ENCODE measurements at regions of chr3 and their contacts with region 1.

Region 1: DNA sequence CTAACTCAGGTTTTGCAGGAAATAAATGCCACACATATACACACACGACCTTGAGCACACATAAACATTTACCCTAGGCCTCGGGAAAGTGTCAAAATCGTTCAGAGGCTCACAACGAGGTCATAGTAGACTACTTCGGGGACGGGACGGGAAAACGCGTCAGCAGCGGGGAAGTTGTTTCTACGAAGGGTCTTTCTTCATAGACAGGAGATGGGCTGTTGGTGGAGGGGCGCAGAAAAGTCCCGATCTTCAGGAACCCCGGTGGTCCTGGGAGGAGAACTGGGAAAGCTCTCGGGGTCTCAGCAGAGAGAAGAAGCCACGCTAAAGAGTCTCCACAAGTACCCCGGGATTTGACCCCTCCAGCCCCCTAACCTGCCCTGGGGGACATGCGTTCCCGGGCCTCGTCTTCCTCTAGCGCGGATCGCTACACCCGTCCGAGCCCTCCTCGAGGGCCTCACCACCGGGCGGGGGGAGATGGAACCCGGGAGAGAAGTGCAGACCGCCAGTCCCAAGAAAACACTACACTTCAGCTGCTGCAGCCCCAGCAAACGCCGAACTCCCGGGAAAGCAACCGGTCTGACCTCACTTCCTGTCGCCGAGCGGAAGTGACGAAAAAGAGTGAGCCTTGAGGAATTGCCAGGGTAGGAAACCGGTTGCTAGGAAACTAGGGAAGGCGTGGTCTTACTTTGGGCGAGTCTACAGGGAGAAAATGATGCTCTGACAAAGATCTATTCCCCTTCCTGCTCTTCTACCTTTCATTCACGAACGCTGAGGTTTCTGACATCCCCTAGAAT is at the start of gene PIK3R4:
- DNase-seq: peak; percentile 84 to 99 (median 92)
- ATAC-seq: peak; percentile 86 to 91 (median 88)
- H3K4me3 ChIP-seq: peak within 1 kb of the TSS; percentile 76 to 87
- H3K4me3 Mint-ChIP-seq: peak within 1 kb of the TSS in 2 of 3 donors; percentile 84 to 87
- H3K27ac ChIP-seq: peak within 1 kb of the TSS; percentile 87
- H3K27ac Mint-ChIP-seq: peak within 1 kb of the TSS; percentile 91 to 92
- H3K4me1 ChIP-seq: peaks cover 4 to 33% of the 10 kb centered on the region in 2 experiments
- H3K4me1 Mint-ChIP-seq: peaks cover 47 to 53% (median 51%) of the 10 kb centered on the region in 3 donors
- H3K27me3 ChIP-seq: no peaks in the 10 kb centered on the region
- H3K27me3 Mint-ChIP-seq: no peaks in the 10 kb centered on the region
- total RNA-seq, gene PIK3R4: 14.4 to 30.7 (median 26.0) TPM

Region 2: GRCh38 chr3:130626049-130626448 is 120.4 kb before region 1 on chr3:
- CTCF ChIA-PET with region 1: no interaction called
- POLR2A ChIA-PET with region 1: no interaction called
- DNase-seq: no peak
- ATAC-seq: no peak
- H3K4me3 ChIP-seq: no peak overlapping the region
- H3K4me3 Mint-ChIP-seq: no peak overlapping the region
- H3K27ac ChIP-seq: no peak overlapping the region
- H3K27ac Mint-ChIP-seq: no peak overlapping the region
- H3K4me1 ChIP-seq: no peaks in the 10 kb centered on the region
- H3K4me1 Mint-ChIP-seq: no peaks in the 10 kb centered on the region
- H3K27me3 ChIP-seq: peaks cover 0 to 2% of the 10 kb centered on the region in 2 experiments
- H3K27me3 Mint-ChIP-seq: peaks cover 18 to 25% of the 10 kb centered on the region in 2 donors

Region 3: DNA sequence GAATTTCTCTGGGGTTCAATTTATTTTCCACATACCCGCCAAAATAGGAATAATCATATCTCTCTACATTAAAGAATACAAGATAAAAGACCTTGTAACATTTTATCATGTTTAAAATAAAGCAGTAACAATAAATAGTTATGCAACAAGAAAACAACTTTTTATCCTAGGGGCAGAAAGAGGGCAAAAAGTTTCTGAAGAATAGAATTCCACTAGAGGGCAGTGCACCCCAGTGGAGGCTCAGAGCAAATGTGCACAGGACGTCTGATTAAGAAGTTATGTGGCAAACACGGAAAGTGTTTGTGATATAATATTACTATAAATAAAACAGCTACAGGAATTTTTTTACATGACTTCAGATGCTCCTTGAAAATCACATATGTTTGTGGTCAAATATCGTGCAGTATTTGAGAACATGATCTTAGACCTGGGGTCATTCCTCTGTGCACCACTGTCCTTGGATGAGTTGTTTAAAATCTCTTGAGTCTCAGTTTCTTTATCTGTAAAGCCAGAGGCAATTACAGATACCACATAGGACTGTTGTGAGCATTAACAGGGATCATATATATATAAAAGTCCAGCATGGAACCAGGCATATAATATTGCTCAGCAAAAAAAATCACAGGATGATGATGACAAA is 13.4 kb after region 1 on chr3:
- CTCF ChIA-PET with region 1: interaction called, 4 to 10 read pairs
- POLR2A ChIA-PET with region 1: interaction called in 1 of 2 experiments, 9 read pairs
- DNase-seq: peak in 31 of 35 experiments; percentile 12 to 73 (median 37)
- ATAC-seq: peak; percentile 57 to 81 (median 66)
- H3K4me3 ChIP-seq: no peak overlapping the region
- H3K4me3 Mint-ChIP-seq: no peak overlapping the region
- H3K27ac ChIP-seq: no peak overlapping the region
- H3K27ac Mint-ChIP-seq: no peak overlapping the region
- H3K4me1 ChIP-seq: no peaks in the 10 kb centered on the region
- H3K4me1 Mint-ChIP-seq: no peaks in the 10 kb centered on the region
- H3K27me3 ChIP-seq: peaks cover 0 to 12% of the 10 kb centered on the region in 2 experiments
- H3K27me3 Mint-ChIP-seq: peaks cover 13 to 20% of the 10 kb centered on the region in 2 donors

Measured in T-cell (primary cell).